ENCODE measurements at regions of chr19 and their contacts with region 1.

Region 1: GRCh38 chr19:16118489-16119033 is 6.9 kb downstream of the RAB8A start:
- DNase-seq: peak in 1 of 9 donors; percentile 60
- ATAC-seq: peak; percentile 80
- H3K4me3 ChIP-seq: no peak overlapping the region
- H3K4me3 Mint-ChIP-seq: peak overlapping the region in 1 of 10 donors; percentile 60
- H3K27ac ChIP-seq: no peak overlapping the region
- H3K27ac Mint-ChIP-seq: peak overlapping the region in 7 of 9 donors; percentile 20 to 93 (median 45)
- H3K4me1 ChIP-seq: peaks cover 0 to 25% of the 10 kb centered on the region in 2 donors
- H3K4me1 Mint-ChIP-seq: peaks cover 27 to 52% (median 32%) of the 10 kb centered on the region in 7 donors
- H3K27me3 ChIP-seq: no peaks in the 10 kb centered on the region
- H3K27me3 Mint-ChIP-seq: no peaks in the 10 kb centered on the region

Region 2: DNA sequence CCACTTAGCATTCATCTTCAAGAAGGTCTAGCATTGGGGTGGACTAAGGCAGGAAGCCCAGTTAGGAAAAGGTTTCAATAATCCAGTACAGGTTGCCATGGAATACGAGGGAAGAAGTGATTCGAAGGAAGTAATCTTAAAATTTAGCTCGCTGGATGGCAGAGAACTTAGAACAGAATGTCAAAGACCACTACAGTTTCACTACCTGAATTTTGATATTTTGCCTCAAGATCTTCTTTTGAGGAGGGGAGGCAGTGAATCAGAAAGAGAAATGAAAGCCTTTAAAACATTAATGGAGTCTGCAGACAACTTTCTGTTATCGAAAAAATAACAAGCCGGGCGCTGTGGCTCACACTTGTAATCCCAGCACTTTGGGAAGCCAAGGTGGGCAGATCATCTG is 13.8 kb before region 1 on chr19:
- CTCF ChIA-PET with region 1: no interaction called
- POLR2A ChIA-PET with region 1: no interaction called
- intact Hi-C with region 1: no loop called
- DNase-seq: no peak
- ATAC-seq: no peak
- H3K4me3 ChIP-seq: no peak overlapping the region
- H3K4me3 Mint-ChIP-seq: no peak overlapping the region
- H3K27ac ChIP-seq: no peak overlapping the region
- H3K27ac Mint-ChIP-seq: peak overlapping the region in 4 of 9 donors; percentile 5 to 67 (median 40)
- H3K4me1 ChIP-seq: no peaks in the 10 kb centered on the region
- H3K4me1 Mint-ChIP-seq: peaks cover 0 to 7% (median under 1%) of the 10 kb centered on the region in 7 donors
- H3K27me3 ChIP-seq: no peaks in the 10 kb centered on the region
- H3K27me3 Mint-ChIP-seq: no peaks in the 10 kb centered on the region

Region 3: GRCh38 chr19:16143399-16144245 is 25.1 kb after region 1 on chr19 and contains the start of gene HSH2D:
- CTCF ChIA-PET with region 1: no interaction called
- POLR2A ChIA-PET with region 1: interaction called, 5 read pairs
- intact Hi-C with region 1: loop called in 1 of 2 experiments (anchors 2 kb)
- DNase-seq: peak; percentile 57 to 83 (median 81)
- ATAC-seq: peak; percentile 94
- H3K4me3 ChIP-seq: peak within 1 kb of the TSS; percentile 95
- H3K4me3 Mint-ChIP-seq: peak within 1 kb of the TSS; percentile 88 to 100 (median 95)
- H3K27ac ChIP-seq: peak within 1 kb of the TSS; percentile 94
- H3K27ac Mint-ChIP-seq: peak within 1 kb of the TSS; percentile 92 to 100 (median 96)
- H3K4me1 ChIP-seq: peaks cover 12 to 26% of the 10 kb centered on the region in 2 donors
- H3K4me1 Mint-ChIP-seq: peaks cover 25 to 57% (median 31%) of the 10 kb centered on the region in 7 donors
- H3K27me3 ChIP-seq: no peaks in the 10 kb centered on the region
- H3K27me3 Mint-ChIP-seq: no peaks in the 10 kb centered on the region
- total RNA-seq, gene HSH2D: 20.0 to 60.0 (median 46.4) TPM

Region 4: DNA sequence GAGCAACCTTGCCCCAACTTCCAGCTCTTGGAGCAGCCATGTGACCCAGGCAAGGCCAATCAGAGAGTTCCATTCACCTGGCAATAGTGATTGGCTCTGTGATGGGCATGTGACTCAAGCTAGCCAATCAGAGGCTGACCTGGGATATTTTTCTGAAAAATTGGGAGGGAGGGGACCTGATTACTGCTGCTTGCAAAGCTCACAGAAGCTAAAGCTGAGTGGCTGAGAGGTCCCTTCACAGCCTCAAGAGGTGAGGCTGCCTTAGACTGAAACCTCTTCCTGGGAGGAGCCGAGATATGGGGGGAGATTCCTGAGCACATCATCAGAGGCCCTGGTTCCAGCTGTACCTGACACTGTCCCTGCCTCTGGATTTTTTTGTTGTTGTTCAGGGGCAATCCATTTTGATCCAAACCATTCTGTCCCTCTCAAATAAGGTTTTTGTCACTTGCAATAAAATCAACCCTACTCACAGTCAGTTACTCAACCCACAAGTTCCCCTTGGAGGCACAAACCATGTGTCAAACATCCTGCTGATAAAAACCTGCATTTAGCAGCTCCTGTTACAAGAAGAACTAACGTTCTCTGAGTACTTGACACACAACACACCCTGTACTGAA is 50.0 kb after region 1 on chr19:
- CTCF ChIA-PET with region 1: no interaction called
- POLR2A ChIA-PET with region 1: interaction called, 3 read pairs
- intact Hi-C with region 1: loop called in 1 of 2 experiments (anchors 1 kb)
- DNase-seq: no peak
- ATAC-seq: peak; percentile 70
- H3K4me3 ChIP-seq: no peak overlapping the region
- H3K4me3 Mint-ChIP-seq: peak overlapping the region in 1 of 10 donors; percentile 23
- H3K27ac ChIP-seq: no peak overlapping the region
- H3K27ac Mint-ChIP-seq: peak overlapping the region in 1 of 9 donors; percentile 60
- H3K4me1 ChIP-seq: peaks cover 0 to 6% of the 10 kb centered on the region in 2 donors
- H3K4me1 Mint-ChIP-seq: peaks cover 0 to 18% (median 0%) of the 10 kb centered on the region in 7 donors
- H3K27me3 ChIP-seq: no peaks in the 10 kb centered on the region
- H3K27me3 Mint-ChIP-seq: no peaks in the 10 kb centered on the region

Measured in naive thymus-derived CD4-positive, alpha-beta T cell (primary cell).